ENCODE measurements at regions of chr12 and their contacts with region 1.

Region 1: DNA sequence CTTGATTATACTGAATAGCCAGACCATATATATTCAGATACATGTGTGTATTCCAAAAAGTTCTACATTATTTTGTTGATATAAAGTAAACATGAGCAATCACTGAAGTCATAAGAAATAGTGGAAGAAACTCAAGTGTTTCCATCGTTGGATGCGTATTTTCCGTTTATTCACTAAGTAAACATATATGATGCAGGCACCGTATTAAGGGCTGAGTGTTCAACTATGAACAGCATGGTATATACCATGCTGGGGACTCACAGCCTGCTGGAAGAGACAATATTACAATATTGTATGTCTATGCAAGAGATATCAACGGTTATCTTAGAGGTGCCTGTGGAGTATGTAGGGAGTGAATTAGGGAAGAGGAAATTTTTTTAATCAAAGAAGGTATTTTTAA is 1.2 kb downstream of the PYROXD1 start:
- DNase-seq: no peak
- ATAC-seq: no peak
- H3K4me3 ChIP-seq: peak overlapping the region in 9 of 10 donors; percentile 58 to 92 (median 73)
- H3K27ac ChIP-seq: peak overlapping the region in 3 of 10 donors; percentile 84 to 94 (median 93)
- H3K4me1 ChIP-seq: peaks cover 0 to 23% (median 11%) of the 10 kb centered on the region in 9 donors
- H3K27me3 ChIP-seq: peaks cover 0 to 3% (median 0%) of the 10 kb centered on the region in 7 donors
- CTCF ChIP-seq: no peak

Region 2: DNA sequence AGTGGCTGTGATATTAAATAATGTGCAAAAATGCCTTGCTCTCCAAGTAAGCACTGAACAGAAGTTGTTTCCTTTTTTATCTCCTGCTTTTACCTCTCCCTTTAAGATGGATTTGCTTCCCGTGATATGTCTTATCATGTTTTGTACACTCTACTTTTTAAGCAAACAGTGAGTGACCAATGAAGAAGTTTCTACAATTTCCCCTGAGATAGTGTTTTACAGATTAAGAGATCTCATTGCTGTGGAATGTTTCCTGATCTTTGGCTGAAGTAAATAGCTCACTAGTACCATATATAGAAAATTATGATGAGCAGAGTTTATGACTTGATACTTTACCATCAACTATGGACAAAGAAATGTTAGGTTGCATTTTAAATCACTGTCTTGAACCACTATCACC is 1255.1 kb before region 1 on chr12:
- intact Hi-C with region 1: no loop called
- DNase-seq: no peak
- ATAC-seq: peak in 1 of 8 donors; percentile 19
- H3K4me3 ChIP-seq: no peak overlapping the region
- H3K27ac ChIP-seq: no peak overlapping the region
- H3K4me1 ChIP-seq: peaks cover 0 to 15% (median 0%) of the 10 kb centered on the region in 9 donors
- H3K27me3 ChIP-seq: no peaks in the 10 kb centered on the region
- CTCF ChIP-seq: no peak

Region 3: GRCh38 chr12:20946732-20947131 is 491.9 kb before region 1 on chr12:
- intact Hi-C with region 1: loop called in 1 of 10 experiments (anchors 10 kb)
- DNase-seq: no peak
- ATAC-seq: no peak
- H3K4me3 ChIP-seq: no peak overlapping the region
- H3K27ac ChIP-seq: no peak overlapping the region
- H3K4me1 ChIP-seq: no peaks in the 10 kb centered on the region
- H3K27me3 ChIP-seq: peaks cover 0 to 3% (median 0%) of the 10 kb centered on the region in 7 donors
- CTCF ChIP-seq: peak in 7 of 9 donors; percentile 24 to 49 (median 34)

Region 4: DNA sequence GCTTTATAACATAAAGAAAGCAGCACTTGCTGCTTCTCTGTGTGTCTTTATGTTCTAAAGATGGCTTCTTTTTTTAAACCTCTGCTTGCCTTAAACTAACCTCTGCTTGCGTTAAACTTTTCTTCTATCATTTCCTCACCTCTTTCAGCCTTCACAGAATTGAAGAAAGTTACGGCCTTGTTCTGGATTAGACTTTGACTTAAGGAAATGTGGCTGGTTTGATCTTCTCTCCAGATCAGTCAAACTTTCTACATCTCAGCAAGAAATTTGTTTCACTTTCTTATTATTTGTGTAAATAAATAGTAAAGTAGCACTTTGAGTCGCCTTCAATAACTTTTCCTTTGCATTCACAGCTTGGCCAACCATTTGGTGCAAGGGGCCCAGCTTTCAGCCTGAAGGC is 671.5 kb after region 1 on chr12:
- intact Hi-C with region 1: no loop called
- DNase-seq: no peak
- ATAC-seq: no peak
- H3K4me3 ChIP-seq: no peak overlapping the region
- H3K27ac ChIP-seq: no peak overlapping the region
- H3K4me1 ChIP-seq: no peaks in the 10 kb centered on the region
- H3K27me3 ChIP-seq: no peaks in the 10 kb centered on the region
- CTCF ChIP-seq: no peak